ENCODE measurements at regions of chr7 and their contacts with region 1.

Region 1: GRCh38 chr7:2209146-2209960 is 23.4 kb downstream of the MAD1L1 start:
- DNase-seq: peak; percentile 59 to 67 (median 64)
- ATAC-seq: peak; percentile 96
- H3K4me3 ChIP-seq: no peak overlapping the region
- H3K27ac ChIP-seq: no peak overlapping the region
- H3K4me1 ChIP-seq: peaks cover 0 to 10% of the 10 kb centered on the region in 2 experiments; a peak in 1 of 5 replicates
- H3K27me3 ChIP-seq: no peaks in the 10 kb centered on the region
- CTCF ChIP-seq: peak; percentile 64 to 70 (median 69); a peak in 5 of 6 replicates
- EP300 ChIP-seq: no peak
- POLR2A ChIP-seq: no peak
- RAD21 ChIP-seq: peak; percentile 51 to 73

Region 2: DNA sequence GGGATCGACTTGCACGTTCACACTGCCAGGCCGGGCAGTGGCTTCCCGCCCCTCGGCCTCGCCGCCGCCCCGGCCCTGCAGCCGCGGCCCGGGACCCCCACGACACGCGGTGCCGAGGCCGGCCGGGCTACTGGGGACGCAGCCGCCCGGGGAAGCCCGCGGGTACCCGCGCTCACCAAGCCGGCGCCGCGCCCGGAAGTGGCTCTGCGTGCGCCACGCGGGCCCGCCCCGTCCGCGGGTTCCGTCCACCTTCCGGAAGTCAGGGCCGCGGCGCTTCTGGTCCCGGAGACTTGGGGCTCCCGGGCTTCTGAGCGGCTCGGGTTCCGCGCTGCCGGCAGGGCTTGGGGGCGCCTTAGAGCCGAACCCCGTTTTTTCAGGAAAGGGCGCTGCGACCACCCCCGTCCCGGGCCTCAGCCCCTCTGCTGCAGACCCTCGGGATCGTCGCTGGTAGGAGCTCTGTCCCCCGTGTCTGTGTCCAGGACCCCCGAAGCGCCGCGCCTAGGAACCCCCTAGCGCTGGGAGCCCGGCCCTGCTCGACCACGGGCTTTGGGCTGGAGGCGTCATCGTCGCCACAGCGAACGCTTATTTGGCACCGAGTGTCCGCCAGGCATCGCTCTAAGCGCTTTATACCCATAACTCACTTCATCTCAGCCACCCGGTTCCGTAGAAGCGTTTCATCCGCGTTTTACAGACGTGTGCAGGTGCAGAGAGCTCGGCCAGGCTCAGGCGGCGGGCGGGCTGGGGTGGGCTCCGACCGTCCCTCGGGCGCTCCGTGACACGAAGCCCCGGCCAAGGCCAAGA is 639.3 kb before region 1 on chr7 and contains the start of gene PSMG3:
- CTCF ChIA-PET with region 1: no interaction called
- POLR2A ChIA-PET with region 1: no interaction called
- in situ Hi-C with region 1: no loop called
- intact Hi-C with region 1: loop called (anchors 10 kb)
- DNase-seq: peak; percentile 92 to 94 (median 93)
- ATAC-seq: peak; percentile 93
- H3K4me3 ChIP-seq: peak within 1 kb of the TSS; percentile 95
- H3K27ac ChIP-seq: peak within 1 kb of the TSS; percentile 95
- H3K4me1 ChIP-seq: peaks cover 33 to 53% of the 10 kb centered on the region in 2 experiments; a peak in 4 of 5 replicates
- H3K27me3 ChIP-seq: no peaks in the 10 kb centered on the region
- CTCF ChIP-seq: peak; percentile 8 to 36 (median 12); a peak in 2 of 6 replicates
- EP300 ChIP-seq: no peak
- POLR2A ChIP-seq: peak; percentile 77
- RAD21 ChIP-seq: no peak
- polyA plus RNA-seq, gene PSMG3: 34.8 to 55.3 TPM

Region 3: DNA sequence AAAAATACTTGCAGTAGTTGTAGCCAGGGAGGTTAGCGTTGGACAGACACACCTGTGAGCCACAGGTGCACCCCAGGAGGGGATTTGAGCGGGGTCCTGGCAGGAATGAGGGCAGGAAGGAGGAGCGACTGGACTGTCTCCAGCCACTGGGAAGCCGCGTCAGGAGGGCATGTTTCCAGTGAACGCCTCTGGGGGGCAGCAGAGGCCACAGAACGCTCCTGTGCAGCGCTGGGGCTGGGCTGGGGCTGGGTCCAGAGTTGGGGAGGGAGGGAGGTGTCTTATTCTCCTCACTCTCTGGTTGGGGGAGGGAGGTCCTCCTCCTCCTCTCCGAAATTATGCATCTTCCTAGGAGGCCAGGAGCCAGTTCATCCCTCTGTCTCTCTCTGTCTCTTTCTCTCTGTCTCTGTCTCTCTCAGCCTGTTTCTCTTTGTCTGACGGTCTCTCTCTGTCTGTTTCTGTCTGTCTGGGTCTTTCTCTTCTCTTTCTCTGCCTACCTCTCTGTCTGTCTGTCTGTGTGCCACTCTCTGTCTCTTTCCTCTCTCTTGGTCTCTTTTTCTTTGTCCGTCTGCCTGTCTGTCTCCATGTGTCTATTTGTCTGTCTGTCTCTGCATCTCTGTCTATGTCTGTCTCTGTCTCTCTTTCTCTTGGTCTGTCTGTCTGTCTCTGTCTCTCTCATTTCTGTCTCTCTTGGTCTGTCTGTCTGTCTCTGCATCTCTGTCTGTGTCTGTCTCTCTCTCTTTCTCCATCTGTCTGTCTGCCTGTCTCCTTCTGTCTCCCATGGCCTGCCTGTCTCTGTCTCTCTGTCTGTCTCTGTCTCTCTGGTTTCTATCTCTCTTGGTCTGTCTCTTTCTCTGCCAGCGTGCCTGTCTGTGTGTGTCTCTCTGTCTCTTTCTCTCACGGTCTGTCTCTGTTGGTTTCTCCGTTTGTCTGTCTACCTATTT is 629.6 kb before region 1 on chr7:
- CTCF ChIA-PET with region 1: interaction called, 12 read pairs
- POLR2A ChIA-PET with region 1: no interaction called
- in situ Hi-C with region 1: loop called (anchors 10 kb)
- intact Hi-C with region 1: loop called (anchors 10 kb)
- DNase-seq: peak; percentile 81 to 84 (median 83)
- ATAC-seq: peak; percentile 99
- H3K4me3 ChIP-seq: no peak overlapping the region
- H3K27ac ChIP-seq: no peak overlapping the region
- H3K4me1 ChIP-seq: peaks cover 9 to 24% of the 10 kb centered on the region in 2 experiments; a peak in 4 of 5 replicates
- H3K27me3 ChIP-seq: peaks cover 17 to 37% of the 10 kb centered on the region in 2 experiments; a peak in 4 of 5 replicates
- CTCF ChIP-seq: peak; percentile 89 to 92 (median 91)
- EP300 ChIP-seq: no peak
- POLR2A ChIP-seq: no peak
- RAD21 ChIP-seq: peak; percentile 84 to 88